CD8-positive, alpha-beta T cell (primary cell): ENCODE measurements at regions of chr16 and their contacts with region 1.

Region 1: DNA sequence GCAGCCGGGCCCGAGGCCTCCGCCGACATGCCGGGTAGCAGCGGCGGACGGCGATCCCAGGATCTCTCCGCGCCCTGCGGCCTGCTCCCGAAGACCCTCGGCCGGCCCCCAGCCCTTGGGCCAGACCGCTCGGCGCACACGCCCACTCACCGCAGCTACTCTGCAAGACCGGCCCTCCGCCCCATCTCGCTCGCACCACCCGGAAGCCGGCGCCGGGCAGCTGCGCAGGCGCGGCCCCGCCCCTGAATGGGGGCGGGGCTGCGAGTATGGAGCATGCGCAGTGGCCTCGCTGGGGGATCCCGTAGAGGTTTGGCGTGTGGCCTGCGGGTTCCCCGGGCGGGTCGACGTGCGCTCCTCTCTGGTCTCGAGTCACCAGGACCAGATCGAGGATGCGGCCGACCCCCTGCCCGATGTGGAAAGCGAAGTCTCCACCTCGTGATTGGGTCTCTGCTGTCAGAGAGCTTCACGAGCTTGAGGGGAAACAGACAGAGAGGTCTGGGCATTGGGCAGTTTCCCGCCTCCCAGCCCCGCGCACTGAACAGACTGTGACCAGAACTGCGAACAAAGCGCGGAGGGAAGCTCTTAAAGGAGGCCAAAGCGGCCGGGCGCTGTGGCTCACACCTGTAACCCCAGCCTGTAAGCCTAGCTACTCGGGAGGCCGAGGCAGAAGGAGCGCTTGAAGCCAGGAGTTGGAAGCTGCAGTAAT is at the start of gene KCTD13:
- DNase-seq: peak; percentile 82 to 98 (median 88)
- ATAC-seq: peak; percentile 93
- H3K4me3 ChIP-seq: peak within 1 kb of the TSS; percentile 90 to 92
- H3K4me3 Mint-ChIP-seq: peak within 1 kb of the TSS; percentile 96
- H3K27ac ChIP-seq: peak within 1 kb of the TSS; percentile 73
- H3K27ac Mint-ChIP-seq: peak within 1 kb of the TSS; percentile 95
- H3K4me1 ChIP-seq: peaks cover 21% of the 10 kb centered on the region
- H3K4me1 Mint-ChIP-seq: peaks cover 37% of the 10 kb centered on the region
- H3K27me3 ChIP-seq: no peaks in the 10 kb centered on the region
- H3K27me3 Mint-ChIP-seq: no peaks in the 10 kb centered on the region
- CTCF ChIP-seq: no peak
- total RNA-seq, gene KCTD13: 39.7 to 41.6 TPM

Region 2: DNA sequence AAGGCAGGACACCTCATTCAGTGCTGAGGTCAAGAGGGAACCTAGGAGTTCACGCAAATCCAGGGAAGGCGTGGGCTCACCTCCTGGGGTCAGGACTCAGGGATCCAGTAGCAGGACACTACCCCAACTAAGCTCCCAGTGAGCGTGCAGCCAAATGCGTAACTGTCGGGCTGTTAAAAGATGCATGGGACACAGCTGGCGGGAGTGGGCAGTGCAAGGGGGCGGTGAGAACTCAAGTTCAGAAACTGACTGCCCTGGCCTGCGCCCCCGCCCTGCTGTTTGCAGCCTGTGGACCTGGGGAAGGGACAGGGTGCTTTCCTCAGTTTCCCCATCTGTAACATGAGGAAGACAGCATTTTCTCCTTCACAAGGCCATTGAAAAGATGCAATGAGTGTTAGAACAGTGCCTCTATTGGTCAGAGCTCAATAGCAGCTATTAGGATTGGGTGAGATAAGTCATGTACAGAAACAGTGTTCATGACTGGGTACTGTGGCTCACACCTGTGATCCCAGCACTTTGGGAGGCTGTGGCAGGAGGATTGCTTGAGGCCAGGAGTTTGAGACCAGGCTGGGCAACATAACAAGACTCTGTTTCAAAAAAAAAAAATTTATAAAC is 83.3 kb before region 1 on chr16:
- CTCF ChIA-PET with region 1: no interaction called
- POLR2A ChIA-PET with region 1: no interaction called
- intact Hi-C with region 1: no loop called
- DNase-seq: no peak
- ATAC-seq: no peak
- H3K4me3 ChIP-seq: no peak overlapping the region
- H3K4me3 Mint-ChIP-seq: no peak overlapping the region
- H3K27ac ChIP-seq: no peak overlapping the region
- H3K27ac Mint-ChIP-seq: no peak overlapping the region
- H3K4me1 ChIP-seq: no peaks in the 10 kb centered on the region
- H3K4me1 Mint-ChIP-seq: peaks cover 3% of the 10 kb centered on the region
- H3K27me3 ChIP-seq: no peaks in the 10 kb centered on the region
- H3K27me3 Mint-ChIP-seq: no peaks in the 10 kb centered on the region
- CTCF ChIP-seq: no peak

Region 3: DNA sequence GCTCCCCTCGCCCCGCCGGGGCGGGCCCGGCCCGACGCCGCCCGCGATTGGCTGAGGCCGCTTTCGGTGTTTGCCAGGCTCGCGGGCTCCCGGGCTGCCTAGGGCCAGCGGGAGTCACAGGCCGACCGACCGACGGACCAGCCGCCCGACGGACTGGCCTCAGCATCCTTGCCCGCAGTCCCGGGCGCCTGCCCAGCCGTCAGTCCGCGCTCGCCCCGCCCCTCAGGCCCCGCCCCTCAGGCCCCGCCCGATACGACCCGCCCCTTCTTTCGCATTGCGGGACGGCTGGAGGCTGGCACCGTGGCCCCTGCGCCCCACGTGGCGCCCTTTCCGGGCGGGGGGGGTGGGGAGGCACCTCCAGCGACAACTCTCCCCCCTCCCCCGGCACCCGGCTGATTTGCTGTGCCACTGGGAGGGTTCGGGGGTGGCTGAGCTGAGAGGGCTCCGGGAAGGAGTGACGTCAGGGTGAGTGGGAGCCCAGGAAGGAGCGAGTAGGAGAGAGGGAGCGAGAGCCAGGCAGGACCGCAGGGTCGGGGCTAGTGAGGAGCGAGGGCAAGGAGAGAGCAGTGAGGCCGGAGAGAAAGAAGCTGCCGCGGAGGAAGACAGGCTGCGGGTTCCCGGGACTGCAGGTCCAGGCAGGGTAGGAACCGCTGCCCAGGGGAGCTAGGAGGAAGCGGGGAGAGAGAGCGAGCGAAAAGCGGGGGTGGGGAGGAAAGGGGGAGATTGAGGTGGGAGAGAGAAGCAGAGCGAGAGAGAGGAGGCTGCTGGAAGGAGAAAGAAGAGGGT is 25.9 kb before region 1 on chr16 and contains the start of gene ASPHD1:
- CTCF ChIA-PET with region 1: interaction called, 3 read pairs
- POLR2A ChIA-PET with region 1: interaction called, 4 read pairs
- intact Hi-C with region 1: loop called (anchors 1 kb)
- DNase-seq: peak in 5 of 9 experiments; percentile 68 to 85 (median 80)
- ATAC-seq: peak; percentile 87
- H3K4me3 ChIP-seq: peak within 1 kb of the TSS; percentile 40 to 58
- H3K4me3 Mint-ChIP-seq: peak within 1 kb of the TSS; percentile 73
- H3K27ac ChIP-seq: no peak within 1 kb of the TSS
- H3K27ac Mint-ChIP-seq: no peak within 1 kb of the TSS
- H3K4me1 ChIP-seq: peaks cover 13% of the 10 kb centered on the region
- H3K4me1 Mint-ChIP-seq: peaks cover 8% of the 10 kb centered on the region
- H3K27me3 ChIP-seq: peaks cover 8 to 36% of the 10 kb centered on the region in 2 experiments
- H3K27me3 Mint-ChIP-seq: peaks cover 23% of the 10 kb centered on the region
- CTCF ChIP-seq: no peak
- total RNA-seq, gene ASPHD1: not detected

Region 4: DNA sequence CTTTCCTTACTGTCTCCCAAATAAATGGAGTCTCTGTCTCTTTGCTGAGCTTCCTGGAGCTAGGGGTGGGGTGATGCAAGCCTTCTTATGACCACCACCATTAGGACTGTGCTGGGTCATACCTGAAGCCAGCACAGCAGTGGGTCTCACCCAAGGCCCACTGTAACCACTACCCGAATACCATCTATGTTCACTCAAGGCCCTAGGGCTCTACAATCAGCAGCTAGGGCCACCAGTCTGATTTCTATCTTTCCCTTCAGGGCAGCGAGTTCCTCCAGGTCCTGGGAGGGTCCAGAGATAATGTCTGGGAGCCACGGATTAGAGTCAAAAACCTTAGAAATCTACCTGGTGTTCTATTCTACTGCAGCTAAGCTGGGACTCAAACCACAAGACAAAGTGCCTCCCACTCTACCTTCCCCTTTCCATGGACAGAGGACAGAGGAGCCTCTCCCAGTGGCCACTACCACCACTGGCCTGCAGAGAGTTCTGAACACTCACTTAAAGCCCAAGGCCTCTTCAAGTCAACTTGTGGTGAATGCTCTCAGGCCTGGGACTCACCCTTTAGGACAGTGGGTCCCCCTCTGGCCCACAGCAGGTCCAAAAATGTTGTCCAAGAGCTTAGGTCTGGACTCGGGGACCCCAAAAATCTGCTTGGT is 24.8 kb after region 1 on chr16:
- CTCF ChIA-PET with region 1: no interaction called
- POLR2A ChIA-PET with region 1: no interaction called
- intact Hi-C with region 1: no loop called
- DNase-seq: no peak
- ATAC-seq: no peak
- H3K4me3 ChIP-seq: no peak overlapping the region
- H3K4me3 Mint-ChIP-seq: no peak overlapping the region
- H3K27ac ChIP-seq: no peak overlapping the region
- H3K27ac Mint-ChIP-seq: no peak overlapping the region
- H3K4me1 ChIP-seq: no peaks in the 10 kb centered on the region
- H3K4me1 Mint-ChIP-seq: no peaks in the 10 kb centered on the region
- H3K27me3 ChIP-seq: no peaks in the 10 kb centered on the region
- H3K27me3 Mint-ChIP-seq: no peaks in the 10 kb centered on the region
- CTCF ChIP-seq: no peak

Region 5: DNA sequence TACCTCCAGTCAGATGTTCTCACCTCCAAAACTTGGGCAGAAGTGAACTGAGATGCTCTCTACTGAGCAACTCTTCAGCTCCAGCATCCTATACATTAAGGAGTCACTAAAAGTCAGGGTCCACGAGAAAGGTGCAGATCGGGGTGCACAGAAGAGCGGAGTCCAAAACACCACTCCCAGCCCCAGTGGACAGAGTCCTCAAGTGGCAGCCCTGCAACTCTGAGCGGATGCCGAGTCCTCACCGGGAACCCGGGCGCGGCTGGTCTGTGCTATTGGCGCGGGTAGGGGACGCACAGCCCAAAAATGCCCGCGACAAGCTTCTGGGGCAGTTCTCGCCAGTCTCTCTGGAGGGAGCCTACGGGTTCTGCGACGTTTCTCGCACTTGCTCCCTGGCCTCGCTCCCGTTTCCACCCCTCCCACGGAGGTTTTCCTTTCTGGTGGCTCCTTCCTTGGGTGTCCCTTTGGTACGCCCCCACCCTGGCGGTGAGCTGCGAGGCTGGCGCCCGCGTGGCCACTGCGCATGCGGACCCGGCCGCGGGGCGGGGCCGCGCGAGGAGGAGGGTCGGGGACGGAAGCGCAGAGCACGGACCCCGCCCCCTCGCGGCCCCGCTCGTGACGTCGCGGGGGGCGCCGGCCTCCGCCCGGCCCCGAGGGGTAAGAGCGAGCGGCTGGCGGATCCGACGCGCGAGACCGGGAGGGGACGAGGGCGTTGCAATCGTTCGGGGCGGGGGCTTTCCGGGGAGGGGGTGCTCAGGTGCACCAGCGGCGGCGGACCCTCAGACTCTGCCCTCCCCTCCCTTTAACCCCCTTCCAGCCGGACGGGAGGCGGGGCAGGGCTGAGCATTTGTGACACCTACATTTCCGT is 35.6 kb after region 1 on chr16 and contains the start of gene TMEM219:
- CTCF ChIA-PET with region 1: interaction called, 6 read pairs
- POLR2A ChIA-PET with region 1: interaction called, 25 read pairs
- intact Hi-C with region 1: loop called (anchors 1 kb)
- DNase-seq: peak; percentile 87 to 98 (median 95)
- ATAC-seq: peak; percentile 90
- H3K4me3 ChIP-seq: peak within 1 kb of the TSS; percentile 77 to 90
- H3K4me3 Mint-ChIP-seq: peak within 1 kb of the TSS; percentile 89
- H3K27ac ChIP-seq: peak within 1 kb of the TSS; percentile 75 to 88
- H3K27ac Mint-ChIP-seq: peak within 1 kb of the TSS; percentile 95
- H3K4me1 ChIP-seq: peaks cover 19% of the 10 kb centered on the region
- H3K4me1 Mint-ChIP-seq: peaks cover 26% of the 10 kb centered on the region
- H3K27me3 ChIP-seq: no peaks in the 10 kb centered on the region
- H3K27me3 Mint-ChIP-seq: no peaks in the 10 kb centered on the region
- CTCF ChIP-seq: no peak
- total RNA-seq, gene TMEM219: 41.5 to 50.2 TPM